ENCODE measurements at regions of chr1 and their contacts with region 1.

Region 1: GRCh38 chr1:50774759-50775351 is 185.2 kb downstream of the FAF1 start:
- DNase-seq: peak in 3 of 9 experiments; percentile 7 to 68 (median 55)
- ATAC-seq: no peak
- H3K4me3 ChIP-seq: no peak overlapping the region
- H3K4me3 Mint-ChIP-seq: no peak overlapping the region
- H3K27ac ChIP-seq: no peak overlapping the region
- H3K27ac Mint-ChIP-seq: no peak overlapping the region
- H3K4me1 ChIP-seq: no peaks in the 10 kb centered on the region
- H3K4me1 Mint-ChIP-seq: peaks cover 7% of the 10 kb centered on the region
- H3K27me3 ChIP-seq: no peaks in the 10 kb centered on the region
- H3K27me3 Mint-ChIP-seq: no peaks in the 10 kb centered on the region
- CTCF ChIP-seq: peak; percentile 83

Region 2: DNA sequence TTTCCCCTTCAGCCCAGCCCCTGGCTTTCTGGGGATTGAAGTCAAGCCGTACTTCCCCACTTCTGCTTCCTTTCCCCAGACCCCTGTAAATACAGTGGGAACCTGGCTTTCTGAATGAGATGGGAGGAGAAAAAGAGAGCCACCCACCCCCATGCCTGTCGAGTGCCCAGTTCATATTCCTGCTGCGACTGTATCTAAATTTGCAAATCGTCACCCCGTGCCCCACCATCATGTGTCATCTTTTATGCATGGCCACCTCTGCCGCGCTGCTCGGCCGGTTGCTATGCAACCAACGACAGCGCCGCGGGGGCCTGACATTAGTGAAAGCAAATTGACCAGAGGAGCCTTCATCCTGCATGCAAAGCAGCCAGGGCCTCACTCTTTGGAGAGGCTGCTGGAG is 523.2 kb before region 1 on chr1:
- CTCF ChIA-PET with region 1: no interaction called
- POLR2A ChIA-PET with region 1: no interaction called
- intact Hi-C with region 1: no loop called
- DNase-seq: no peak
- ATAC-seq: no peak
- H3K4me3 ChIP-seq: no peak overlapping the region
- H3K4me3 Mint-ChIP-seq: no peak overlapping the region
- H3K27ac ChIP-seq: no peak overlapping the region
- H3K27ac Mint-ChIP-seq: no peak overlapping the region
- H3K4me1 ChIP-seq: no peaks in the 10 kb centered on the region
- H3K4me1 Mint-ChIP-seq: no peaks in the 10 kb centered on the region
- H3K27me3 ChIP-seq: peaks cover 0 to 5% of the 10 kb centered on the region in 2 experiments
- H3K27me3 Mint-ChIP-seq: peaks cover 17% of the 10 kb centered on the region
- CTCF ChIP-seq: no peak

Region 3: GRCh38 chr1:50279622-50280330 is 495.1 kb before region 1 on chr1:
- CTCF ChIA-PET with region 1: no interaction called
- POLR2A ChIA-PET with region 1: no interaction called
- intact Hi-C with region 1: no loop called
- DNase-seq: no peak
- ATAC-seq: no peak
- H3K4me3 ChIP-seq: no peak overlapping the region
- H3K4me3 Mint-ChIP-seq: no peak overlapping the region
- H3K27ac ChIP-seq: no peak overlapping the region
- H3K27ac Mint-ChIP-seq: no peak overlapping the region
- H3K4me1 ChIP-seq: no peaks in the 10 kb centered on the region
- H3K4me1 Mint-ChIP-seq: no peaks in the 10 kb centered on the region
- H3K27me3 ChIP-seq: peaks cover 0 to 4% of the 10 kb centered on the region in 2 experiments
- H3K27me3 Mint-ChIP-seq: peaks cover 22% of the 10 kb centered on the region
- CTCF ChIP-seq: no peak

Region 4: DNA sequence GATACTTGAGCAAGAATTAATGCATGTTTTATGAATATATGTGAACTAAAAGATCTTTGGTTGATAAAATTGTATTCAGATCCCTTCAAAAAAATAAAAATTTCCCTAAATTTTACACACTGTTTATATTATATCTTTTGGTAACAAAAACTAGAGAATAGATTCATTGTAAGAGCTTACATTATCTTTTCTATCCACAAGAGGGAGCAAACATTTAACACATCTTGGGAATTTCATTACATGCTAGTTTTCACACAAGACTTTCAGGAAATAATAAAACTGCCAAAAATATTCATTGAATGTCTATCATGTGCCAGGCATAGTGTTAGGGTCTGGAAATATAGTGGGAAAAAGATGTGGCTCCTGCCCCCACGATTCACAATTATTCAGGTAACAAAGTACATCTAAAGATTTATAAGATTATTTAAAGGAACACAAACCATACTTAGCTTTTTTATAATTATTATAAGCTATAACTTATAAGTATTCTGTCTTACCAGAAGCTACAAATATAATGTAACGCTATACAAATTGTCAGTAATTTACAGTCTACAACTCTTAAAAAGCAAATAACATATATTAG is 154.6 kb after region 1 on chr1:
- CTCF ChIA-PET with region 1: interaction called, 10 read pairs
- POLR2A ChIA-PET with region 1: no interaction called
- intact Hi-C with region 1: loop called (anchors 5 to 10 kb)
- DNase-seq: peak in 2 of 9 experiments; percentile 30 to 50
- ATAC-seq: no peak
- H3K4me3 ChIP-seq: no peak overlapping the region
- H3K4me3 Mint-ChIP-seq: no peak overlapping the region
- H3K27ac ChIP-seq: no peak overlapping the region
- H3K27ac Mint-ChIP-seq: no peak overlapping the region
- H3K4me1 ChIP-seq: no peaks in the 10 kb centered on the region
- H3K4me1 Mint-ChIP-seq: peaks cover 29% of the 10 kb centered on the region
- H3K27me3 ChIP-seq: no peaks in the 10 kb centered on the region
- H3K27me3 Mint-ChIP-seq: no peaks in the 10 kb centered on the region
- CTCF ChIP-seq: peak; percentile 71

Region 5: DNA sequence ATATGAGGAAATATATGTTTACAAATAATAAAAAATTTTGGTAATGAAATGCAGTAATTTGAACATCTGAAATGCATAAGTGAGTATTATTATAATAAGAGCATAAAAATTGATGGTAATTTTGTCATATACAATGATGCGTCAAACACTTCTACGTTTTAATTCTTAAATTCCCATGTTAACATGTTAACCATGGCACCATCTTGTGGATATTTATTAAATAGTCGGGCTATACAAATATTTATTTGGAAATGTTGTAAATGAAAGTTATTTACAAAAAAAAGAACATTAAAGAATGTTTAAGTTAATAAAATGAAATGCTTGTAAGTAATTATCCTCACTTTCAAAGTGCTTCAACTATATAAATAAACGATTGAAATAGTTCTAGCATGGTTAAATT is 270.0 kb after region 1 on chr1:
- CTCF ChIA-PET with region 1: interaction called, 4 read pairs
- POLR2A ChIA-PET with region 1: no interaction called
- intact Hi-C with region 1: loop called (anchors 2 to 5 kb)
- DNase-seq: peak in 2 of 9 experiments; percentile 6 to 22
- ATAC-seq: no peak
- H3K4me3 ChIP-seq: no peak overlapping the region
- H3K4me3 Mint-ChIP-seq: no peak overlapping the region
- H3K27ac ChIP-seq: no peak overlapping the region
- H3K27ac Mint-ChIP-seq: no peak overlapping the region
- H3K4me1 ChIP-seq: no peaks in the 10 kb centered on the region
- H3K4me1 Mint-ChIP-seq: no peaks in the 10 kb centered on the region
- H3K27me3 ChIP-seq: peaks cover 0 to 2% of the 10 kb centered on the region in 2 experiments
- H3K27me3 Mint-ChIP-seq: peaks cover 11% of the 10 kb centered on the region
- CTCF ChIP-seq: no peak

Region 6: GRCh38 chr1:51296383-51297357 is 521.8 kb after region 1 on chr1:
- CTCF ChIA-PET with region 1: no interaction called
- POLR2A ChIA-PET with region 1: no interaction called
- intact Hi-C with region 1: loop called in 1 of 2 experiments (anchors 5 kb)
- DNase-seq: peak; percentile 40 to 76 (median 69)
- ATAC-seq: peak; percentile 88
- H3K4me3 ChIP-seq: peak overlapping the region; percentile 34 to 46
- H3K4me3 Mint-ChIP-seq: peak overlapping the region; percentile 73
- H3K27ac ChIP-seq: no peak overlapping the region
- H3K27ac Mint-ChIP-seq: no peak overlapping the region
- H3K4me1 ChIP-seq: peaks cover 5% of the 10 kb centered on the region
- H3K4me1 Mint-ChIP-seq: peaks cover 10% of the 10 kb centered on the region
- H3K27me3 ChIP-seq: no peaks in the 10 kb centered on the region
- H3K27me3 Mint-ChIP-seq: no peaks in the 10 kb centered on the region
- CTCF ChIP-seq: peak; percentile 88

Region 7: DNA sequence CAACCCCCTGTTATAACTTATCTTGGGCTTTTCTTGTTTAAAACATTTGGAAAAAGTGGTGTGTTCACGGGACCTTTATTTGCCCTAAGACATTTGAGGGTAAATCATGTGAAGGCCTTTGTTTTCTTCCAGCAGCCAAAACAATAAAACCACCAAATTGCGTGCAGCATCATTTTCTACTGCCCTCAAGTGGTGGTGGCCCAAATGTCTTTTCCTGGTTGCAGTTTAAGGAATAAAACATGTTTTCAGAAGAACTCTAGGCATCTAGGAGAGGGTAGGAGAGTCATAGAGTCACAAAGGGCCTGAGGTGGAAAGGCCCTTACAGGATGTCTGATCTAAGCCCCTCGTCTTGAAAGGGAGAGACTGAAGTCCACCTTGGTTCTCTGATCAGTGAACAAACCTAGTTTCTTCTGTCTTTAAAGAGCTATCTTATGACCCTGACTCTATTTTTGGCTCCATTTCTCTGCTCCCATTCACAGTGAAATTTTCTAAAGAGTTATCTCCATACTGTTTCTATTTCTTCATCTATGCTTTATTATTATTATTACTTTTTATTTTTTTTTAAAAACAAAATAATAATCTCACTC is 760.2 kb after region 1 on chr1:
- CTCF ChIA-PET with region 1: no interaction called
- POLR2A ChIA-PET with region 1: no interaction called
- intact Hi-C with region 1: loop called in 1 of 2 experiments (anchors 10 kb)
- DNase-seq: peak; percentile 8 to 72 (median 38)
- ATAC-seq: peak; percentile 57
- H3K4me3 ChIP-seq: no peak overlapping the region
- H3K4me3 Mint-ChIP-seq: no peak overlapping the region
- H3K27ac ChIP-seq: no peak overlapping the region
- H3K27ac Mint-ChIP-seq: peak overlapping the region; percentile 62
- H3K4me1 ChIP-seq: peaks cover 7% of the 10 kb centered on the region
- H3K4me1 Mint-ChIP-seq: peaks cover 10% of the 10 kb centered on the region
- H3K27me3 ChIP-seq: no peaks in the 10 kb centered on the region
- H3K27me3 Mint-ChIP-seq: no peaks in the 10 kb centered on the region
- CTCF ChIP-seq: peak; percentile 62

Region 8: GRCh38 chr1:51776408-51776807 is 1001.6 kb after region 1 on chr1:
- CTCF ChIA-PET with region 1: no interaction called
- POLR2A ChIA-PET with region 1: no interaction called
- intact Hi-C with region 1: loop called in 1 of 2 experiments (anchors 10 kb)
- DNase-seq: no peak
- ATAC-seq: no peak
- H3K4me3 ChIP-seq: no peak overlapping the region
- H3K4me3 Mint-ChIP-seq: no peak overlapping the region
- H3K27ac ChIP-seq: no peak overlapping the region
- H3K27ac Mint-ChIP-seq: no peak overlapping the region
- H3K4me1 ChIP-seq: no peaks in the 10 kb centered on the region
- H3K4me1 Mint-ChIP-seq: peaks cover 4% of the 10 kb centered on the region
- H3K27me3 ChIP-seq: no peaks in the 10 kb centered on the region
- H3K27me3 Mint-ChIP-seq: no peaks in the 10 kb centered on the region
- CTCF ChIP-seq: no peak